Breast epithelium (tissue), 4 donors: ENCODE measurements at regions of chr12 and their contacts with region 1.

Region 1: DNA sequence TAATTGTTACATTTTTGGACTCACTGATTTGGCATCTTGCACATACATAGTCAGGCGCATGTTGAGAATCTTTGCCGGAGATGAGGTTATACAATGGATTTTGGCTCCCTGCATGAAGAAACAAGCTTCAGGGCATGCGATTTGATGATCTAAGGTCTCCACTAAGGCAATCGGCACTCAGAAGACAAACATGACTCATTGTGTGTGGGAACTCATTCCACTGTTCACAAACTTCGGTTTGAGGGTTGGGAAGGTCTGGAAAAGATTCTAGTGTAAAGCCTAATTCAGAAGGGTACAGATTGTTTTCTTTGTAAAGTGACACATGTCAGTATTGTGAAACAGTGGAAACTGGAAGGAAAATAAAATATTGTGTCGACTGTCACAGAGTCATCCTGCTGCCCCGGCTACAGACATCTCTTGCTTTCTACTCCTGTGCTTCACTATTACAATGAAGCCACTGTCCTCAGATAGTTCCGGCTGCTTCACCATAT is 192.6 kb upstream of the HMGA2 start:
- DNase-seq: peak in 1 of 2 donors; percentile 57
- H3K4me3 ChIP-seq: peak overlapping the region in 1 of 3 donors; percentile 27
- H3K27ac ChIP-seq: peak overlapping the region; percentile 21 to 82
- H3K4me1 ChIP-seq: peaks cover 0 to 5% of the 10 kb centered on the region in 2 donors
- H3K27me3 ChIP-seq: no peaks in the 10 kb centered on the region
- CTCF ChIP-seq: no peak
- POLR2A ChIP-seq: no peak

Region 2: GRCh38 chr12:65798918-65799317 is 167.3 kb after region 1 on chr12:
- intact Hi-C with region 1: loop called (anchors 5 kb)
- DNase-seq: no peak
- H3K4me3 ChIP-seq: no peak overlapping the region
- H3K27ac ChIP-seq: no peak overlapping the region
- H3K4me1 ChIP-seq: no peaks in the 10 kb centered on the region
- H3K27me3 ChIP-seq: no peaks in the 10 kb centered on the region
- CTCF ChIP-seq: no peak
- POLR2A ChIP-seq: no peak